AG04449 (cell line): ENCODE measurements at regions of chr6 and their contacts with region 1.

Region 1: DNA sequence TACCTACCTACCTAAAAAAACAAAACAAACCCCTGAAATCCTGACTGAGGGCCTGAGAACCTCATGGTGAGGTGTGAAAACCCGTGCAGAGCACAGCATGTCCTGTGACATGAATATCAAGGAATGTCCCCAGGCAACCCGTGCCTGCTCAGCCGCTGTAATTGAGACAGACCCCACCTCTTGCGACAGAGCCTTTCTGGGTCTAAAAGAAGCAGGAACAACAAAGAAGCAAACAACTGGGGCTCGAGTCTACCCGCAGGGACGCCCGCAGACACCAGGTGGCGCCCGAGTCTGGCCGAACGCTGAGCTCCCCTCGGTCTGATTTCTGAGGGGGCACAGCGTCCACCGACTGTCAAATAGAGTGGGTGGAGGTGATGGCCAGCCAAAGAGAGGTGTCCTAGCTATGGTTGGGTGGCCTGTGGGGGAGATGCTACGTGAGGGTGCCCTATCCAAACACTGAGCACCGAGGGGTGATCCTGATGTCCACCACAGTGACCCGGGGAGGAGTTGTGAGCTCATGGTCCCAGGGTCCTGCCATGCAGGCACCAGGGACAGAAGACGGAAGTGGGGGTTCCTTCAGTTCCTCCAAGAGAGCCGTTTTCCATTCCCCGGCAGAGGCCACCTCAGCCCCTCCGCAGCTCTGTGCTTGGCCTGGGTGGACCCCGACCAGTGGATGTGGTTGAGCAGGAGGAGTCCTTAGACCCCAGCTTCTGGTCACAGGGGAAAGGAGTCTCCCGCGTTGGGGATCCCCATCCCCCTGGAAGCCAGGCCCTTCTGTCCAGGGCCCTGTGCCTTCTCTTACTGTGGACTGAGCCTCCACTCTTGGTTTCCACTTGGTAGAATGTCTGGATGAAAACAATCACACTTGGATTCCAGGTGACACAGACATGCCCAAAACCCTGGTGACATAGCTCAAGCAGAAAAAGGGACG is 268.2 kb downstream of the CDC5L start:
- DNase-seq: no peak
- H3K4me3 ChIP-seq: no peak overlapping the region
- CTCF ChIP-seq: peak; percentile 92

Region 2: GRCh38 chr6:44297063-44298038 is 358.3 kb before region 1 on chr6:
- CTCF ChIA-PET with region 1: no interaction called
- POLR2A ChIA-PET with region 1: no interaction called
- DNase-seq: no peak
- H3K4me3 ChIP-seq: peak overlapping the region; percentile 43
- CTCF ChIP-seq: no peak

Region 3: DNA sequence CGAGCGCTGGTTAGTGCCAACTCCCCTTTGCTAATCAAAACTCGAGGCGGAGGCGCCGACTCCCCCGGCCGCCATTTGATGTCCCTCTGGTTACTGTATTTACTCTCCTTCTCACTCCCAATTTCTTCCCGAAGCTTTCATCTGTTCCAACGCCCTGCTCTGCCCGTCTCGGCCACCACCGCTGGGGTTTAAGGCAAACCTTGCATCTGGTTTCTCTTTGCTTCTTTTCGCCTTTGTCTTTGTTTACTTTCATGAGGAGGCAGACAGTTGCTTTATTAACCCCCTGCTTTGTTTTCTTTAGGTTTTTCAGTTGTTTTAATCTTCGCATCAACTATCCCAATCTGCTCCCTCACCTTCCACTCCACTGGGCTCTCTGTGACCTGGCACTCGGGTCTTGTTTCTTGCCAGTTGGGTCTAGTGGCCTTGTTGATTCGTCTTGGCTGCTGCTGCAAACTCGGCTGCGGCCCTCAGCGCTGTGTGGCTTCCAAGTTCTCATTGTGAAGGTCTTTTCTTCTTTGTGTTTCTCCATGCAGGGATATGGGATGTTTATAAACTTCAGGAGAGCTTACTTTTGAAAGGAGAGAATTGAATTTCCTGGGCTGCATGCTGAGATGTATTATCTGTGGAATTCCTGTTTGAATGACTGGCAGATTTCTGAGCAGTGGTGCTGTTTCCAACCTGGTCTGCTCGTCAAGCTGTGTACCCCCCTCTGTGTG is 113.1 kb before region 1 on chr6:
- CTCF ChIA-PET with region 1: no interaction called
- POLR2A ChIA-PET with region 1: no interaction called
- DNase-seq: no peak
- H3K4me3 ChIP-seq: peak overlapping the region; percentile 15; the same call in 1 of the 2 replicates
- CTCF ChIP-seq: no peak

Region 4: DNA sequence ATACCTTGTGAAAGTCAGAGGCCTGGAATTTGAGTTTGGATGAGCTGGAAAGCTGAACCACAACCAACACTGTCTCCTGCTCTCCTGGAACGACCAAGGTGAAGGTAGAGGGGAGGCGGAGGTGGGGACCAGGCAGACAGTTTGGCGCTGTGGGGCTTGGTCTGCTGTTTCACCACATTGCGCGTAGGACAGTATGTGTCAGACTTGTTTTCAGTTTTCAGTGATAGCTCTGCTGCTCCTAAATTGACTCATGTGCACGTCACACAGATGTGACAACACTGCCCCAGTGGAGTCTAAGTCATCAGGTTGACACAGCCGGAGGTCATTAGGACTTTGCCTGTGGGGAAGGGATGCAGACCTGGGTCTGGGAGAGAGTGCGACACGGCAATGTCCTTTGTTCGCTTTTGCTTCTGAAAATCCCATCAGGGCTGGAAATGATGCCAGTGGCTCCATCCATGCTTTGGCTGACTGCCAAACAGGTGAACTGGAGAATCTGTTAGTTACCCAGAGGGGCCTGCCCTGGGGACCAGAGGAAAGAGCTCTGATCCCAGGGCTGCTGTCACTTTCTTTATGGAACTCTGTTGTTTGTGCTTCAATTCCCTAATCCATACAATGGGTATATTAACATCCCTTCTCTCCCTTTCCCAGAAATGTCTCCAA is 12.7 kb before region 1 on chr6:
- CTCF ChIA-PET with region 1: interaction called, 25 read pairs
- POLR2A ChIA-PET with region 1: no interaction called
- DNase-seq: no peak
- H3K4me3 ChIP-seq: no peak overlapping the region
- CTCF ChIP-seq: no peak

Region 5: GRCh38 chr6:44820321-44820720 is 164.6 kb after region 1 on chr6:
- CTCF ChIA-PET with region 1: interaction called, 10 read pairs
- POLR2A ChIA-PET with region 1: no interaction called
- DNase-seq: no peak
- H3K4me3 ChIP-seq: no peak overlapping the region
- CTCF ChIP-seq: no peak

Region 6: GRCh38 chr6:44906761-44907160 is 251.1 kb after region 1 on chr6:
- CTCF ChIA-PET with region 1: no interaction called
- POLR2A ChIA-PET with region 1: no interaction called
- DNase-seq: no peak
- H3K4me3 ChIP-seq: no peak overlapping the region
- CTCF ChIP-seq: no peak

Region 7: GRCh38 chr6:44965708-44966107 is 310.0 kb after region 1 on chr6:
- CTCF ChIA-PET with region 1: interaction called, 12 read pairs
- POLR2A ChIA-PET with region 1: no interaction called
- DNase-seq: no peak
- H3K4me3 ChIP-seq: no peak overlapping the region
- CTCF ChIP-seq: no peak

Region 8: DNA sequence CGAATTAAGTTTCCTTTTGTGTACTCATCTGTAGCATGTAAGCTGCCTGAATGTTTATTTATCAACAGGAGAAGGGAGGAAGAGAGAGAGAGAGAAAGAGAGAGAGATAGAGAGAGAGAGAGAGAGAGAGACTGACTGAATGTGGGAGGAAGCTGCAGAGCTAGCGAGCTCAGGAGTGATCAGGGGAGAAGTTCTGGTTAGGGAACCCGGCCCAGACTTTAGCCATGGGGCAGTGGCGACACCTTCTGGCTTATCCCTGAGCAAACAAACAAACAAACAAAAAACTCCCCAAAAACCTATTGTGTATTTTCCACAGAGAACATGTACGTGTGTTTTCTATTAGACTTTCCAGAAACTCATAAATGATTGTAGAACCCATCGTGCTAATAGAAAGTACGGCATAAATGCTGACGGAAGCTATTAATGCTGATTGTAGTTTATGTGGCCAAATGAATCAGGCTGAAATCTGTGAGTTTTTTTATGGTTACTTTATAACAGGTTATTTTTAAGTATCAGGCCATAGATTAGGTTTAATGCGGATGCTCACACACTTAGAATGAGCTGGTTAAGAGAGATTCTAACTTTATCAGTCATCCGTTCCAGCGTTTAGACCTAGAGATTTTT is 1267.2 kb after region 1 on chr6:
- CTCF ChIA-PET with region 1: interaction called, 24 read pairs
- POLR2A ChIA-PET with region 1: no interaction called
- DNase-seq: peak; percentile 67
- H3K4me3 ChIP-seq: no peak overlapping the region
- CTCF ChIP-seq: peak; percentile 68